Sciatic nerve (tissue), 2 donors: ENCODE measurements at regions of chr1 and their contacts with region 1.

Region 1: GRCh38 chr1:78722947-78723346 is 73.3 kb downstream of the IFI44 start:
- DNase-seq: no peak
- ATAC-seq: no peak

Region 2: GRCh38 chr1:78663916-78664315 is 59.0 kb before region 1 on chr1:
- intact Hi-C with region 1: loop called (anchors 2 kb)
- DNase-seq: no peak
- ATAC-seq: no peak